T-cell (primary cell): ENCODE measurements at regions of chr1 and their contacts with region 1.

Region 1: DNA sequence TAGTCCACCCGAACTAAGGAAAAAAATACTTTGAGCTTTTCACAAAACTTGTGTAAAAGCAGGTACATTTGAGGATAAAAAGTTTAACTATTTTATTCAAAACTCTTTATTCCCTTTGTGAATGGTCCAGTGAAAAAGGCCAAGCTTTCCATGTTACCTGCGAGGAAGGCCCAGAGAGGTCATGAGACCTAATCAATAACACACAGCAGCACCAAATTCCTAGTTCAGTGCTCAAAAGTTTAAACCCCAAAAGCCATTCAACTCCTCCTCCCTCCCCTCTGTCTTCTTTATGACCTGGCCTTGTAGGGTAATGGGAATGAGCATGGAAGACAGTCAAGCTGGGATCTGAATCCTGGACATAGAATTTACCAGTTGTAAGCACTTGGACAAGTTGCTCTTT is 151.9 kb upstream of the FGGY start:
- DNase-seq: no peak
- ATAC-seq: no peak
- H3K4me3 ChIP-seq: no peak overlapping the region
- H3K4me3 Mint-ChIP-seq: no peak overlapping the region
- H3K27ac ChIP-seq: no peak overlapping the region
- H3K27ac Mint-ChIP-seq: no peak overlapping the region
- H3K4me1 ChIP-seq: peaks cover 0 to 10% of the 10 kb centered on the region in 2 experiments
- H3K4me1 Mint-ChIP-seq: peaks cover 13 to 18% (median 16%) of the 10 kb centered on the region in 3 donors
- H3K27me3 ChIP-seq: no peaks in the 10 kb centered on the region
- H3K27me3 Mint-ChIP-seq: peaks cover 0 to 2% of the 10 kb centered on the region in 2 donors

Region 2: GRCh38 chr1:59113876-59114457 is 31.0 kb before region 1 on chr1:
- CTCF ChIA-PET with region 1: no interaction called
- POLR2A ChIA-PET with region 1: interaction called in 1 of 2 experiments, 10 read pairs
- DNase-seq: no peak
- ATAC-seq: no peak
- H3K4me3 ChIP-seq: no peak overlapping the region
- H3K4me3 Mint-ChIP-seq: no peak overlapping the region
- H3K27ac ChIP-seq: no peak overlapping the region
- H3K27ac Mint-ChIP-seq: no peak overlapping the region
- H3K4me1 ChIP-seq: no peaks in the 10 kb centered on the region
- H3K4me1 Mint-ChIP-seq: peaks cover 0 to 3% (median 0%) of the 10 kb centered on the region in 3 donors
- H3K27me3 ChIP-seq: no peaks in the 10 kb centered on the region
- H3K27me3 Mint-ChIP-seq: no peaks in the 10 kb centered on the region